Activated naive CD8-positive, alpha-beta T cell treated with anti-CD3 and anti-CD28 coated beads, Interleukin-2, amount 10 ng/mL, durations not matched to agents 7 days and 5 days (primary cell): ENCODE measurements at regions of chr14 and their contacts with region 1.

Region 1: GRCh38 chr14:24215495-24216344 is at the start of gene MDP1:
- DNase-seq: peak; percentile 85
- ATAC-seq: peak; percentile 73
- H3K4me3 Mint-ChIP-seq: peak within 1 kb of the TSS; percentile 93
- H3K27ac Mint-ChIP-seq: peak within 1 kb of the TSS; percentile 98
- H3K4me1 Mint-ChIP-seq: peaks cover 38% of the 10 kb centered on the region
- H3K27me3 Mint-ChIP-seq: no peaks in the 10 kb centered on the region
- total RNA-seq, gene MDP1: 11.9 to 15.4 TPM

Region 2: DNA sequence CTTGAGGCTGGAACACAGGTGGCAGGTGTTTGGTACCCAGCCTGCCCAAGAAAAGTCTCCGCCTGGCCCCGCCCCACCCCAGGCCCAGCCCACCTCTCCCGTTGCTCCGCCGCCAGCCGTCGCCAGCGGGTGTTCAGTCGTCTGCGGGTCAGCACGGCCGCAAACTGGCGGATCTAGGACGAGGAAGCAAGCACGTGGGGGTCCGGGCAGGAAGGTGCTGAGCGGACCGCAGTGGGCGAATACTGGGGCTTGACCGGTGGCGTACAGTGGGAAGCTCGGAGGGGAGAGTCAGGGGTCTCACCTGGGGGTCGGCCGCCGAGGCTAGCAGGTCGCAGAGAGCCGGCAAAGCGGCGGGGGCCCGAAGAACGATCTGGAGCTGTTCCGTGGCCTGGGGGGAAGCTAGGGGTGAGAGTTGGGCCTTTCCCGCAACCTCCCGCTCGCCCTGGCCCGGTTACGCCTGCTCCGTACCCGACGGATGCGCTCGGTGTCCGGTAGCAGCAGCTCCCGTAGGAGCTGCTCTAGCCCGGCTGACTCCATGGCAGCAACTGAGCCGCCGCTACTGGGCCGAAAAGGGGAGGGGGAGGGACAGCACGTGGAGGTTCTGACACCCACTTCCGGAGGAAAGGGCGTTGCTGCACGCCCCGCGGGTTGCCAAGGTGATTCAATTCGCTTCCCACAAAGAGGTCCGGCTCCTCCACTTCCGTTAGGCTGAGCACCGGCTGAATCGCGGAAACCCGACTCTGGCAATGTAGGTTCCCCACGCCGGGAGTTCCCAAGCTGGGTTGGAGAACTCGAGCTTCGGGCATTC is 27.3 kb before region 1 on chr14 and contains the start of gene IPO4:
- POLR2A ChIA-PET with region 1: interaction called, 52 read pairs
- DNase-seq: peak; percentile 87
- ATAC-seq: peak; percentile 85
- H3K4me3 Mint-ChIP-seq: peak within 1 kb of the TSS; percentile 85
- H3K27ac Mint-ChIP-seq: peak within 1 kb of the TSS; percentile 69
- H3K4me1 Mint-ChIP-seq: peaks cover 28% of the 10 kb centered on the region
- H3K27me3 Mint-ChIP-seq: no peaks in the 10 kb centered on the region
- total RNA-seq, gene IPO4: 32.2 to 33.0 TPM

Region 3: GRCh38 chr14:24232121-24232644 is 16.5 kb after region 1 on chr14 and contains the start of gene NEDD8:
- POLR2A ChIA-PET with region 1: interaction called, 11 read pairs
- DNase-seq: peak; percentile 86
- ATAC-seq: peak; percentile 82
- H3K4me3 Mint-ChIP-seq: peak within 1 kb of the TSS; percentile 93
- H3K27ac Mint-ChIP-seq: peak within 1 kb of the TSS; percentile 92
- H3K4me1 Mint-ChIP-seq: peaks cover 38% of the 10 kb centered on the region
- H3K27me3 Mint-ChIP-seq: no peaks in the 10 kb centered on the region
- total RNA-seq, gene NEDD8: 179 to 196 TPM

Region 4: DNA sequence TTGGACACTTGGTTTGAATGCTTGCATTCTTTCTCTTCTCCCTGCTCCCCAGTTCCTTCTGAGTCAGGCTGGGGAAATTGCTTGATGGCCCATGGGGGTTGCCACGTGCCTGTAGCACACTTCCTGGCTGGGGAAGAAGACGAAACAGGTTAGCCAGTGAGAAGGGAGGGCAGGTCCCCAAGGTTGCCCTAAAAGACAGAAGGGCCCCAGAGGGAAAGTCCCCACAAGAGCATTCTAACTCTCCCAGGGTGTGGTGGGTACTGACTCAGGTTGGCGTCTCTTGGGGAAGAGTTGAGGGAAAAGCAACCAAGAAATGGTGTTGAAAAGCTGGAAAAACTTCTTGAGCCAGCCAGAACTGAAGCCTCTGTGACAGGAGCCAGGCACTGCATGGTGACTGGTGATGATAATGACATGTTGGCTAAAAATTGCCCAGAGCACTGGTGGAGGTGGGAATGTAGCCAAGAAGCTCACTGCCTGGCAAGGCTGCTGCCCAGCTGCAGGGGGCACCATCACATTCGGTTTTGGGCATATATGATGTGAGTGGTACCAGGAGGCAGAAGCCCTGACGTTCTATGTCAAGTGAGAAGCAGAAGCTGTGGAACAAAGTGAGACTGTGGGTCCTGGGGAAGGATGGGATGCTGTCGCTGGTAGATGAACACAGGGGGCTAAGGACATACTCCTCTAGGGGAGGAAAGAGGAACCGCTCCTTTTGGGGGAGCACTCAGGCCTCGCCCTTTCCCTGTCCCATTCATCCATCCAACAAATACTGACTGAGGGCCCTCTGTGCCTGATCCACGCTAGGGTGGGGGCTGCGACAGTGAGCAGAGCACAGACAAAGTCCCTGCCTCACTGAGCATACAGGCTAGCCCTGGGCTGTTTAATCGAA is 63.8 kb after region 1 on chr14:
- POLR2A ChIA-PET with region 1: no interaction called
- DNase-seq: no peak
- ATAC-seq: peak; percentile 71
- H3K4me3 Mint-ChIP-seq: no peak overlapping the region
- H3K27ac Mint-ChIP-seq: peak overlapping the region; percentile 28
- H3K4me1 Mint-ChIP-seq: peaks cover 23% of the 10 kb centered on the region
- H3K27me3 Mint-ChIP-seq: peaks cover 7% of the 10 kb centered on the region

Region 5: GRCh38 chr14:24299255-24300195 is 83.8 kb after region 1 on chr14 and contains the starts of genes DHRS1 and NOP9:
- POLR2A ChIA-PET with region 1: interaction called, 11 read pairs
- DNase-seq: peak; percentile 97
- ATAC-seq: peak; percentile 82
- H3K4me3 Mint-ChIP-seq: peak within 1 kb of the TSS; percentile 94
- H3K27ac Mint-ChIP-seq: peak within 1 kb of the TSS; percentile 95
- H3K4me1 Mint-ChIP-seq: peaks cover 41% of the 10 kb centered on the region
- H3K27me3 Mint-ChIP-seq: no peaks in the 10 kb centered on the region
- total RNA-seq, gene DHRS1: 36.0 to 41.9 TPM
- total RNA-seq, gene NOP9: 28.7 to 31.1 TPM